Activated CD8-positive, alpha-beta T cell treated with anti-CD3 and anti-CD28 coated beads for 36 hours (primary cell): ENCODE measurements at regions of chr4 and their contacts with region 1.

Region 1: GRCh38 chr4:147866532-147867271 is 134.8 kb downstream of the ARHGAP10 start:
- DNase-seq: peak; percentile 97
- ATAC-seq: peak; percentile 95
- H3K4me3 Mint-ChIP-seq: no peak overlapping the region
- H3K27ac Mint-ChIP-seq: no peak overlapping the region
- H3K4me1 Mint-ChIP-seq: no peaks in the 10 kb centered on the region
- H3K27me3 Mint-ChIP-seq: no peaks in the 10 kb centered on the region
- CTCF ChIP-seq: peak; percentile 99

Region 2: DNA sequence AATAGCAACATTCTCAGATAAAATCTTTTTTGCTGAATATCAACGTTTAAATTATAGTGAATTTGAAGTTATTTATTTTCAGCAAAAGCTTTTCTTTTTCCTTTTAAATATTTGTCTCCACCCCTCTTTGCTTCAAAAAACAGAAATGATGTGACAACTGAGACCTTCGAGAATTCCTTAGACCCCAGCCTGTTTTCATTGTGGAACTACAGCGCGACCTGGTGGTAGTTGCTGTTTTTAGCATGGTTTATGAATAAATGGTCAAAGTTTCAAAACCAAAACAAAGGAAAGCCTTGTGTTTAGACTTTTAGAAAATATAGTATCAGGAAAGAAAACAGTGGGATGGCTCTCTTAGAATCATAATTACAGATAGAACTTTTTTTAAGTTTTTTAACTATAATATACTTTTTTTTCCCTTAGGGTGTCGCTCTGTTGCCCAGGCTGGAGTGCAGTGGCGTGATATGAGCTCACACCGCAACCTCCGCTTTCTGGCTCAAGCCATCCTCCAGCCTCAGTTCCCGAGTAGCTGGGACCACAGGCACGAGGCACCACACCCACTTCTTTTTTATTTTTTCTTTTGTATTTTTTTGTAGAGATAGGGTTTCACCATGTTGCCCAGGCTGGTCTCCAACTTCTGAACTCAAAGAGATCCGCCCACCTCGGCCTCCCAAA is 276.3 kb before region 1 on chr4:
- CTCF ChIA-PET with region 1: interaction called, 46 read pairs
- POLR2A ChIA-PET with region 1: no interaction called
- intact Hi-C with region 1: loop called (anchors 10 kb)
- DNase-seq: peak; percentile 75
- ATAC-seq: no peak
- H3K4me3 Mint-ChIP-seq: no peak overlapping the region
- H3K27ac Mint-ChIP-seq: no peak overlapping the region
- H3K4me1 Mint-ChIP-seq: peaks cover 2% of the 10 kb centered on the region
- H3K27me3 Mint-ChIP-seq: no peaks in the 10 kb centered on the region
- CTCF ChIP-seq: peak; percentile 87

Region 3: GRCh38 chr4:147644471-147644870 is 222.2 kb before region 1 on chr4:
- CTCF ChIA-PET with region 1: interaction called, 15 read pairs
- POLR2A ChIA-PET with region 1: no interaction called
- intact Hi-C with region 1: no loop called
- DNase-seq: no peak
- ATAC-seq: no peak
- H3K4me3 Mint-ChIP-seq: no peak overlapping the region
- H3K27ac Mint-ChIP-seq: no peak overlapping the region
- H3K4me1 Mint-ChIP-seq: peaks cover 46% of the 10 kb centered on the region
- H3K27me3 Mint-ChIP-seq: no peaks in the 10 kb centered on the region
- CTCF ChIP-seq: no peak

Region 4: DNA sequence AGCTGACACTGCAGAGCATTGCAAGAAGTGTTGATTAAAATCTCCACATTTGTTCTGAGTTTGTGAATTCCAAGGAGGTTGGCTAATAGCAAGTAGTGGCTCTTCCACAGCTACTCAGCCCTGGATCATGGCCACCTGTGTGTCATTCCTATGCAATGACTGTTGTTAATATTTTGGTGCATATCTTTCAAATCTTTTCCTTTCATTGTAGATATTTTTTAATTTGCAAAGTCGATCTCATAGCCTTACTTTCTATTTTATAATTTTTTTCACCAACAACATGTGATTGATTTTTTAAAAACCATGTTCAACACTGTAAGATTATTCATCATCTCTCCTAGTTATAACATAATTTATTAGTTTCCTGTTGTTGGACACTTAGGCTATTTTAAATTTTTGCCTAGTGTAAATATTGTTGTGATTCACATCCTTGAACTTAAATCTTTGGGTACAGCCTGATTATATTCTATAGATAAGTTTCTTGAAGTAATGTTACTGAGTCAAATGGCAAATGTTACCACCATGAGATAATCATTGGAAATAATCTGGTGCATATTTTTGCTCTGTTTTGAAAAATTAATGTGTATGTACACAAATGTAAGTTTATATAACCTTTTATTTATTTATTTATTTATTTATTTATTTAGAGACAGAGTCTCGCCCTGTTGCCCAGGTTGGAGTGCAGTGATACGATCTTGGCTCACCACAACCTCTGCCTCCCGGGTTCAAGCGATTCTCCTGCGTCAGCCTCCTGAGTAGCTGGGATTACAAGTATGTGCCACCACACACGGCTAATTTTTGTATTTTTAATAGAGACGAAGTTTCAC is 151.9 kb before region 1 on chr4:
- CTCF ChIA-PET with region 1: interaction called, 180 read pairs
- POLR2A ChIA-PET with region 1: no interaction called
- intact Hi-C with region 1: no loop called
- DNase-seq: no peak
- ATAC-seq: no peak
- H3K4me3 Mint-ChIP-seq: no peak overlapping the region
- H3K27ac Mint-ChIP-seq: no peak overlapping the region
- H3K4me1 Mint-ChIP-seq: peaks cover 5% of the 10 kb centered on the region
- H3K27me3 Mint-ChIP-seq: peaks cover 2% of the 10 kb centered on the region
- CTCF ChIP-seq: no peak

Region 5: GRCh38 chr4:147755561-147756295 is 111.0 kb before region 1 on chr4:
- CTCF ChIA-PET with region 1: interaction called, 13 read pairs
- POLR2A ChIA-PET with region 1: no interaction called
- intact Hi-C with region 1: no loop called
- DNase-seq: no peak
- ATAC-seq: no peak
- H3K4me3 Mint-ChIP-seq: no peak overlapping the region
- H3K27ac Mint-ChIP-seq: no peak overlapping the region
- H3K4me1 Mint-ChIP-seq: peaks cover 8% of the 10 kb centered on the region
- H3K27me3 Mint-ChIP-seq: no peaks in the 10 kb centered on the region
- CTCF ChIP-seq: no peak

Region 6: GRCh38 chr4:147831551-147832177 is 35.0 kb before region 1 on chr4:
- CTCF ChIA-PET with region 1: interaction called, 14 read pairs
- POLR2A ChIA-PET with region 1: no interaction called
- intact Hi-C with region 1: no loop called
- DNase-seq: no peak
- ATAC-seq: no peak
- H3K4me3 Mint-ChIP-seq: no peak overlapping the region
- H3K27ac Mint-ChIP-seq: no peak overlapping the region
- H3K4me1 Mint-ChIP-seq: peaks cover 11% of the 10 kb centered on the region
- H3K27me3 Mint-ChIP-seq: no peaks in the 10 kb centered on the region
- CTCF ChIP-seq: no peak

Region 7: DNA sequence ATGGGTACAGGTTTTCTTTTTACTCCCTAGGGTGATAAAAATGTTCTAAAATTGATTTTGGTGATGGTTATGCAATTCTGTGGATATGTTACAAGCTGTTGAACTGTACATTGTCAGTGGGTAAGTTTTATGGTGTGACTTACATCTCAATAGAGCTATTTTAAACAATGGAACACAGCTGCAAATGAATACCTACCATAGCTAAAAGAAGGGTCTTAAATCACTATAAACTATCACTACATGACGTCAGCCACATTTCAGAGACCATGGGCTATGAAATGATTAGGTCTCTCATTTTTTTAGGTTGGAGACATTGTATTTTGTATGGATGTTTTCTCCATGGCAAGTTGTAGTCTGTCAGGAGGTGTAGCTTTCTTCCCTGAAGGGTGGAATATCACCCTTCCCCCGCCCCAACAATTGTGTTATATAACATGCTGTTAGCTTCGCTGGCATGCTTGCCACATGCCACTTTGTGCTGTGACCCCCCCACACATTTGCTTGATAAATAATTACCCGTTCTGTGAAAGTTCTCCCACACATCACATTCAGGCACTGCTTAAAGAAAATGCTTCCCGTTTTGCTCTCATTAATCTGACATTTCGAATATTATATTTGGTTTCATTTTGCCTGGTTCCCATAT is 24.9 kb after region 1 on chr4:
- CTCF ChIA-PET with region 1: interaction called, 10 read pairs
- POLR2A ChIA-PET with region 1: no interaction called
- intact Hi-C with region 1: no loop called
- DNase-seq: no peak
- ATAC-seq: no peak
- H3K4me3 Mint-ChIP-seq: no peak overlapping the region
- H3K27ac Mint-ChIP-seq: no peak overlapping the region
- H3K4me1 Mint-ChIP-seq: no peaks in the 10 kb centered on the region
- H3K27me3 Mint-ChIP-seq: no peaks in the 10 kb centered on the region
- CTCF ChIP-seq: no peak

Region 8: DNA sequence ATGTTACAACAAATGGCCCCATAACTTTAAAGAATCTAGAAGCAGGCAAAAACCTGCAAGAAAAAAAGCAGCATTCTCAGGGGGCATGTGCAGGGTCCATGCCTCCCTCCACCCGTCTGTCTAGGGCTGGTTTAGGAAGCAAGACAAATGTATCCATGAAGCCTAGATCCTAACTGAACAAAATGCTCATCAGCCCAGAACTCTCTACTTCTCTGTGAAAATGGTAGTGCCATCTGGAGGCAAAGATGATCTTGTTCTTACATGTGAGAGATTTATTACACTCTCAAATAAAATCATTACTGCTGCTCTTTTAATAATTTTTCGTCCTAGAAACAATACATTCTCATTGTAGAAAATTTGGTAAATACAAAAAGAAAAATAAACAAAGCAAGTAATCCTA is 548.8 kb after region 1 on chr4:
- CTCF ChIA-PET with region 1: no interaction called
- POLR2A ChIA-PET with region 1: no interaction called
- intact Hi-C with region 1: no loop called
- DNase-seq: no peak
- ATAC-seq: no peak
- H3K4me3 Mint-ChIP-seq: no peak overlapping the region
- H3K27ac Mint-ChIP-seq: no peak overlapping the region
- H3K4me1 Mint-ChIP-seq: peaks cover 60% of the 10 kb centered on the region
- H3K27me3 Mint-ChIP-seq: no peaks in the 10 kb centered on the region
- CTCF ChIP-seq: peak; percentile 11